ENCODE measurements at regions of chr7 and their contacts with region 1.

Region 1: GRCh38 chr7:123865517-123866117 is 20.6 kb downstream of the HYAL4 start:
- DNase-seq: peak; percentile 41 to 51
- H3K4me3 ChIP-seq: no peak overlapping the region
- H3K27ac ChIP-seq: no peak overlapping the region
- H3K4me1 ChIP-seq: peaks cover 6% of the 10 kb centered on the region; the same call in 1 of the 2 replicates
- H3K27me3 ChIP-seq: no peaks in the 10 kb centered on the region
- CTCF ChIP-seq: peak; percentile 87

Region 2: GRCh38 chr7:123643495-123644441 is 221.8 kb before region 1 on chr7:
- CTCF ChIA-PET with region 1: interaction called, 8 read pairs
- POLR2A ChIA-PET with region 1: interaction called, 19 read pairs
- intact Hi-C with region 1: no loop called
- DNase-seq: peak; percentile 52 to 70
- H3K4me3 ChIP-seq: peak overlapping the region; percentile 50
- H3K27ac ChIP-seq: peak overlapping the region; percentile 42
- H3K4me1 ChIP-seq: peaks cover 26% of the 10 kb centered on the region
- H3K27me3 ChIP-seq: no peaks in the 10 kb centered on the region
- CTCF ChIP-seq: no peak

Region 3: GRCh38 chr7:123682690-123683089 is 182.9 kb before region 1 on chr7:
- CTCF ChIA-PET with region 1: no interaction called
- POLR2A ChIA-PET with region 1: no interaction called
- intact Hi-C with region 1: loop called (anchors 2 kb)
- DNase-seq: peak; percentile 27 to 67
- H3K4me3 ChIP-seq: no peak overlapping the region
- H3K27ac ChIP-seq: no peak overlapping the region
- H3K4me1 ChIP-seq: no peaks in the 10 kb centered on the region
- H3K27me3 ChIP-seq: no peaks in the 10 kb centered on the region
- CTCF ChIP-seq: peak; percentile 73

Region 4: GRCh38 chr7:123904151-123904550 is 38.5 kb after region 1 on chr7:
- CTCF ChIA-PET with region 1: no interaction called
- POLR2A ChIA-PET with region 1: no interaction called
- intact Hi-C with region 1: no loop called
- DNase-seq: no peak
- H3K4me3 ChIP-seq: no peak overlapping the region
- H3K27ac ChIP-seq: no peak overlapping the region
- H3K4me1 ChIP-seq: no peaks in the 10 kb centered on the region
- H3K27me3 ChIP-seq: no peaks in the 10 kb centered on the region
- CTCF ChIP-seq: no peak

Region 5: DNA sequence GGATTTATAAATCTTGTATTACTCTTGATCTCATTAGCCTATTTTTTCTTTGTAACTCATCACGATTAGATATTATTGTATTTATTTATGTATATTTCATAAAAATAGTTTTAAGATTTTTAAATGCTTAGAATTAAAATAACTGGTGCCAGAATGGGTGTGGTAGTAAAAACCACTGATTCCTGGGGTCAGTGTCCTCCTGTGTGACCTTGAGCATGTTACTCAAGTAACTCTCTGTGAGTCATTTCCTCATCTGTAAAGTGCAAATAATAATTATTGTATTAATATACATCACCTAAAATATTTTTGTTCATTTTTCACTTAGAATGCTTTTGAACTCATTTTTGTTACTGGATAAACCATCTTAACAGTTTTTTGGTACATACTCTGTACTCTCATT is 258.6 kb after region 1 on chr7:
- CTCF ChIA-PET with region 1: no interaction called
- POLR2A ChIA-PET with region 1: no interaction called
- intact Hi-C with region 1: no loop called
- DNase-seq: no peak
- H3K4me3 ChIP-seq: no peak overlapping the region
- H3K27ac ChIP-seq: no peak overlapping the region
- H3K4me1 ChIP-seq: no peaks in the 10 kb centered on the region
- H3K27me3 ChIP-seq: no peaks in the 10 kb centered on the region
- CTCF ChIP-seq: no peak

Region 6: DNA sequence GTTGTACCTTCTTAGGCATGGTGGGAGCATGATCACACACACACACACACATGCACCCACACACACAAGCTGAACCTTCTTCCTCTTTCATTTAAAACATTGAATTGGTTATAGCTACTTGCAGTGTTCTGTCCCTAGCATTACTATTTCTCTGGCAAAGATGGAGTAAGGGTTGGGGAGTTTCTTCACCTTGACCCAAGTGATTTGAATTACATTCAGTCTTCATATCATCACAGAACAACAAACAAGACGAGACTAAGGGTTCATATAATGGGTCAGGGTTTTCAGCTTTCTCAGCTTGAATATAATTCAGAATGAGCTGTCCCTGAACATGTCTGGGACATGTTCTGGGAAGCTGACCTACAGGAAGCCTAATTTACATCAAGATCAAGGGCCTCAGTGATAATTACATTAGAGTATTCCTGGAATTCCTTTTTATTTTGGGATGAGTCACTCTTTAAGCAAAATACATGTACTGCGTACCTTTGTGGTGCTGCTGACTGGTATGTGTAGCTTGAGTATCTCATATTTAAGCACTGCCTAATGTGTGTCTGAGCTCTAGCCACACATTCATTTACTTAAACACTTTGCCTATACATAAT is 380.7 kb after region 1 on chr7:
- CTCF ChIA-PET with region 1: no interaction called
- POLR2A ChIA-PET with region 1: no interaction called
- intact Hi-C with region 1: no loop called
- DNase-seq: no peak
- H3K4me3 ChIP-seq: no peak overlapping the region
- H3K27ac ChIP-seq: no peak overlapping the region
- H3K4me1 ChIP-seq: no peaks in the 10 kb centered on the region
- H3K27me3 ChIP-seq: no peaks in the 10 kb centered on the region
- CTCF ChIP-seq: no peak

Measured in PC-9 (cell line).